T-cell (primary cell): ENCODE measurements at regions of chr3 and their contacts with region 1.

Region 1: DNA sequence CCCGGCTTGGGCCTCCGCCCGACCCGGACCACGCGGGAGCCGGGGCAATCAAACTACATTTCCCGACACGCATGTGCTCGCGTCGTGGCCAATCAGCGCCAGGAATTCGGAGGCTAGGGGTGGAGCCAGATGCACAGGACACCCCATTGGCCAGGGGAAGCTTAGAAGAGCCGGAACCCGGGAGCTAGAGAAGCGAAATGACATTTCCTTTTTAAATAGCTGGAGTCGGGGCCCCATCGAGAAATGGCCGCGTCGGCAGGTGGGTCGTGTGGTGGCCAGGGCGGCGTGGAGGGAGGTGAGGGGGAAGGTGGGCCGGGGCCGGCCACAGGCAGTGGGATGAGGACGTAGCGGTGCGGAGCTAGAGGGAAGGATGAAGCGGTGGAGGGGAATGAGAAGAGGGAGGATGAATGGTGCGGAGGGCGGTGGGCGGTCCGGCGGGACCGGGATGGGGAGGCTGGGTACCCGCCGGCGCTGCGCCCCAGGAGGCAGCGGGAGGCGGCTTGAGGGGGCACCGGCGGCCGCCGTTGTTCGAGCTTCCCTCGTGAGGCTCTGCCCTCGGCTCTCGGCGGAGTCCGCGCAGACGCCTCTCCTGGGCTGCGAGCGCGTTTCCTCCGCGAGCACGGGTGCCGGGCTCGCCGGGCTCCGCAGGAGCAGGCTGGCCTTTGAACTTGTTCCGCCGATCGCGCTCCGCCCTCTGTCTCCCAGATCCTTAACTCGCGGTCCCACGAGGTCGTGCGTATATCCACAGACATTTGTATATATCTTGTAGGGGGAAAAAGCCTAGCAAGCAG is at the start of gene KBTBD8:
- DNase-seq: peak; percentile 22 to 98 (median 95)
- ATAC-seq: peak; percentile 95 to 98 (median 97)
- H3K4me3 ChIP-seq: peak within 1 kb of the TSS; percentile 69 to 70
- H3K4me3 Mint-ChIP-seq: peak within 1 kb of the TSS; percentile 90 to 95 (median 93)
- H3K27ac ChIP-seq: peak within 1 kb of the TSS; percentile 47
- H3K27ac Mint-ChIP-seq: peak within 1 kb of the TSS; percentile 89 to 95
- H3K4me1 ChIP-seq: peaks cover 6 to 14% of the 10 kb centered on the region in 2 experiments
- H3K4me1 Mint-ChIP-seq: peaks cover 22 to 37% (median 35%) of the 10 kb centered on the region in 3 donors
- H3K27me3 ChIP-seq: no peaks in the 10 kb centered on the region
- H3K27me3 Mint-ChIP-seq: peaks cover 14 to 22% of the 10 kb centered on the region in 2 donors
- total RNA-seq, gene KBTBD8: 3.3 to 11.5 (median 6.1) TPM

Region 2: DNA sequence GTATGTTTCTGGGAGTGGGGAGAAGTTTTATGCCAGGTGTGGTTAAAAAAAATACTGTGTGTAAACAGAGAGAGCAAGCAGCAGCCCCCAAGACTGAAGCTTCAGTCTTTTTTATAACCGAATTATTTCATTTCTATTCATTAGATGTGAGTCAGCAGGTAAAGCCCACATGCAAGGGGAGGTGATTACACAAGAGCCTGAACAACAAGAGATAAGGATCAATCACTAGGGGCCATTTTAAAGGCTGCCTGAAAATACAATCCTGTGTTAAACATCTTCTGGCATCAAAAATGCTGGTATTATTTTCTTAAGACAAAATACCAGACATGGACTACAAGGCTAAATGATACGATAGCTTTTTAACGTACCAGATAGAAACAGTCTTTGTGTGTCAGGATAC is 438.8 kb after region 1 on chr3:
- CTCF ChIA-PET with region 1: no interaction called
- POLR2A ChIA-PET with region 1: no interaction called
- DNase-seq: no peak
- ATAC-seq: no peak
- H3K4me3 ChIP-seq: no peak overlapping the region
- H3K4me3 Mint-ChIP-seq: no peak overlapping the region
- H3K27ac ChIP-seq: no peak overlapping the region
- H3K27ac Mint-ChIP-seq: no peak overlapping the region
- H3K4me1 ChIP-seq: no peaks in the 10 kb centered on the region
- H3K4me1 Mint-ChIP-seq: peaks cover 20 to 28% (median 26%) of the 10 kb centered on the region in 3 donors
- H3K27me3 ChIP-seq: no peaks in the 10 kb centered on the region
- H3K27me3 Mint-ChIP-seq: no peaks in the 10 kb centered on the region

Region 3: GRCh38 chr3:67654099-67654843 is 656.0 kb after region 1 on chr3 and contains the start of gene SUCLG2:
- CTCF ChIA-PET with region 1: no interaction called
- POLR2A ChIA-PET with region 1: interaction called in 1 of 2 experiments, 14 read pairs
- DNase-seq: peak; percentile 51 to 84 (median 74)
- ATAC-seq: peak; percentile 75 to 79 (median 76)
- H3K4me3 ChIP-seq: peak within 1 kb of the TSS; percentile 82 to 90
- H3K4me3 Mint-ChIP-seq: peak within 1 kb of the TSS; percentile 77 to 82 (median 80)
- H3K27ac ChIP-seq: peak within 1 kb of the TSS; percentile 83
- H3K27ac Mint-ChIP-seq: peak within 1 kb of the TSS; percentile 92 to 94
- H3K4me1 ChIP-seq: peaks cover 35 to 36% of the 10 kb centered on the region in 2 experiments
- H3K4me1 Mint-ChIP-seq: peaks cover 73 to 78% (median 73%) of the 10 kb centered on the region in 3 donors
- H3K27me3 ChIP-seq: no peaks in the 10 kb centered on the region
- H3K27me3 Mint-ChIP-seq: no peaks in the 10 kb centered on the region
- total RNA-seq, gene SUCLG2: 45.6 to 65.9 (median 49.5) TPM